Mammary epithelial cell (primary cell): ENCODE measurements at regions of chr15 and their contacts with region 1.

Region 1: GRCh38 chr15:77959432-77959879 is 118.1 kb downstream of the TBC1D2B start:
- DNase-seq: peak; percentile 57
- H3K4me3 ChIP-seq: peak overlapping the region in 2 of 3 experiments; percentile 21 to 28
- H3K27ac ChIP-seq: no peak overlapping the region
- H3K4me1 ChIP-seq: peaks cover 4% of the 10 kb centered on the region
- H3K27me3 ChIP-seq: no peaks in the 10 kb centered on the region
- CTCF ChIP-seq: peak; percentile 83 to 98

Region 2: GRCh38 chr15:78004919-78005634 is 45.6 kb after region 1 on chr15:
- CTCF ChIA-PET with region 1: no interaction called
- dilution Hi-C with region 1: no loop called
- in situ Hi-C with region 1: no loop called
- intact Hi-C with region 1: no loop called
- DNase-seq: peak; percentile 12
- H3K4me3 ChIP-seq: no peak overlapping the region
- H3K27ac ChIP-seq: no peak overlapping the region
- H3K4me1 ChIP-seq: peaks cover 14% of the 10 kb centered on the region
- H3K27me3 ChIP-seq: no peaks in the 10 kb centered on the region
- CTCF ChIP-seq: no peak

Region 3: DNA sequence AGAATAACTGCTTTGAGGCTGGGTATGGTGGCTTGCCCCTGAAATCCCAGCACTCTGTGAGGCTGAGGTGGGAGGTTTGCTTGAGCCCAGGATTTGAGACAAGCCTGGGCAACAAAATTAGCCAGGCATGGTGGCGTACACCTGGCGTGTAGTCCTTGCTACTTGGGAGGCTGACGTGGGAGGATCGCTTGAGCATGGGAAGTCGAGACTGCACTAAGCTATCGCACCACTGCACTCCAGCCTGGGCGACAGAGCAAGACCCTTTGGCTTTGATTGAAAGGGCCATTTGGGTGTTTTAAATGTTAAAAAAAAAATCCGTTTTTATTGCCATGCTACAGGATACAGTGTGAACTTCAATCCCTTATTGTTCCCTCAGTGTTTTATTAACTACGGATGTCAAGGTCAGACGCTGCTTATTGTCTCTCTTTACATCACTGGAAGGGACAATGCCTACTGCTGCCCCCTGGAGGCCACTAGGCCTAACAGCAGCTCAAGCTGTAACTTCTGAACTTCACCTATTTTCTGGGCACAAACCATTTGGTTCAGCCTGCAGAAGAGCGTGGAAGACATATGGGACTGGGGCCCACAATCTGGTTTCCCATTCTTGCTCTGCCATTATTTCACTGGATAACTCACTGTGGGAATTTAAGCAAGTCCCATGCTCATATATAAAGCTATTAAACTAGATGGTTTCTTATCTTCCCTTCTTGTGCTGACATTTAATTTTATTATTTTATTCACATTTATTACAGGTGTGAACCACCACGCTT is 463.3 kb after region 1 on chr15:
- CTCF ChIA-PET with region 1: no interaction called
- dilution Hi-C with region 1: no loop called
- in situ Hi-C with region 1: no loop called
- intact Hi-C with region 1: loop called (anchors 1 kb)
- DNase-seq: peak; percentile 29
- H3K4me3 ChIP-seq: no peak overlapping the region
- H3K27ac ChIP-seq: no peak overlapping the region
- H3K4me1 ChIP-seq: no peaks in the 10 kb centered on the region
- H3K27me3 ChIP-seq: no peaks in the 10 kb centered on the region
- CTCF ChIP-seq: peak; percentile 92 to 95